ENCODE measurements at regions of chr6 and their contacts with region 1.

Region 1: DNA sequence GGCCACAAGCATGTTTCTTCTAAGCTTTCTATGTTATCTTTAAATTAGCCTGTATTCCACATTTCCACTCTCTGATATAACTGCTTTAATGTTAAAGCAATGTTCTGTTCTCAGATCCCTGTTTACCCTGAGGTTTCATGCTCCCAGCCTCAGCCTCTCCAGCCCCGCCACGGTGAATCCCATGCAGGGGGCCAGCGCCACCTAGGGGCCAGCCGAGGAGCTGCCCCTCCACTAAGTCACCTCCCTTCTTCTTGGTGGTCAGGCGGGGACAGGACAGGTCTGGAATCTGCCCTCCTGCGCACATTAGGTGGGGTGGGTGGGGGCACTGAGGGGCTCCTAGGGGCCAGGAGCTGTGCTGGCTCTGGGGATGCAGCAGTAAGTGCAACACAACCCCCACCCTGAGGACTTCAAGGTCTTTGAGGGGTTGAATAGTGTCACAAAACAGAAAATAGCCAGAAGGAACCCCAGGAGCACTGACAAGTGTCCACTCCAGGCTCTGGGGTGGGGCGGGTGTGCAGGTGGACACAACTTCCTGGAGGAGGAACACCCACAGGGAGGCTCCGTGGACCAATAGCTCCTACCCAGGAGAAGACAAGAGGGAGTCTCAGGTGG is 61.6 kb downstream of the RAB44 start:
- DNase-seq: peak; percentile 45
- H3K4me3 ChIP-seq: no peak overlapping the region
- H3K27ac ChIP-seq: no peak overlapping the region
- H3K27me3 ChIP-seq: peaks cover 4% of the 10 kb centered on the region
- CTCF ChIP-seq: peak; percentile 99

Region 2: DNA sequence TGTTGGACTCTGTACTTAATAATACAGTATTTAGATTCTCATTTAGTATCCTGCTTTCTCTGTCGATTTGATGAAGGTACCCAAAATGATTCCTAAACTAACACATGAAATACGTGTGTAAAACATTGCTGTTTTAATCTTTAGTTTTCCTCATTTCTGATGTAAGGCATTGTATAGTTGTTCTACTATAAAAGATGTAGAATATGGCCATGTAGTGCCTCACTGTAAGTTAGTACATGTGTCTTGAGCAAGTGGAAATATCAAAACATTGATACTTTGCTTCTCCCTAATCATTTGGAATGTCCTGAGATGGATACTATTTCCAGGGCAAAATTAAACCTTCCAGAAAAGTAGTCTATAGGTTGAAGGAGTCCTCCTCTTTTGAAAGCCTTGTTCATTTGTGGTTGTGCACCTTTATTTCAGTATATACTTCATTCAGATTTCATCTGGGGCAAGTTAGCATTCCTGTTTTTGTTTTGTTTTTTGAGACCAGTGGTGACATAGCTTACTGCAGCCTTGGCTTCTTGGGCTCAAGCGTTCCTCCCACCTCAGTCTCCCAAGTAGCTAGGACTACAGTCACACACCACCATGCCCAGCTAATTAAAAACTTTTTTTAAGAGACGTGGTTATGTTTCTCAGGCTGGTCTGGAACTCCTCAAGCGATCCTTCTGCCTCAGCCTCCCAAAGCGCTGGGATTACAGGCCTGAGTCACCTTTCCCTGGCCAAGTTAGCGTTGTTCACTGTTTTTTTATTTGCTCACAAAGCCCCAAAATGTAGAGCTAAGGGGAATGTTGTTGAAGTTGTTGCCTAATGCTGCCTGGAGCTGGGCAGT is 153.5 kb before region 1 on chr6:
- CTCF ChIA-PET with region 1: interaction called, 15 read pairs
- POLR2A ChIA-PET with region 1: no interaction called
- DNase-seq: no peak
- H3K4me3 ChIP-seq: no peak overlapping the region
- H3K27ac ChIP-seq: no peak overlapping the region
- H3K27me3 ChIP-seq: no peaks in the 10 kb centered on the region
- CTCF ChIP-seq: 0 out of 2 replicates have a peak, but pooled peaks have one; percentile 15

Region 3: GRCh38 chr6:36623547-36624459 is 135.5 kb before region 1 on chr6:
- CTCF ChIA-PET with region 1: interaction called, 38 read pairs
- POLR2A ChIA-PET with region 1: no interaction called
- DNase-seq: peak; percentile 56
- H3K4me3 ChIP-seq: no peak overlapping the region
- H3K27ac ChIP-seq: no peak overlapping the region
- H3K27me3 ChIP-seq: no peaks in the 10 kb centered on the region
- CTCF ChIP-seq: peak; percentile 90

Region 4: DNA sequence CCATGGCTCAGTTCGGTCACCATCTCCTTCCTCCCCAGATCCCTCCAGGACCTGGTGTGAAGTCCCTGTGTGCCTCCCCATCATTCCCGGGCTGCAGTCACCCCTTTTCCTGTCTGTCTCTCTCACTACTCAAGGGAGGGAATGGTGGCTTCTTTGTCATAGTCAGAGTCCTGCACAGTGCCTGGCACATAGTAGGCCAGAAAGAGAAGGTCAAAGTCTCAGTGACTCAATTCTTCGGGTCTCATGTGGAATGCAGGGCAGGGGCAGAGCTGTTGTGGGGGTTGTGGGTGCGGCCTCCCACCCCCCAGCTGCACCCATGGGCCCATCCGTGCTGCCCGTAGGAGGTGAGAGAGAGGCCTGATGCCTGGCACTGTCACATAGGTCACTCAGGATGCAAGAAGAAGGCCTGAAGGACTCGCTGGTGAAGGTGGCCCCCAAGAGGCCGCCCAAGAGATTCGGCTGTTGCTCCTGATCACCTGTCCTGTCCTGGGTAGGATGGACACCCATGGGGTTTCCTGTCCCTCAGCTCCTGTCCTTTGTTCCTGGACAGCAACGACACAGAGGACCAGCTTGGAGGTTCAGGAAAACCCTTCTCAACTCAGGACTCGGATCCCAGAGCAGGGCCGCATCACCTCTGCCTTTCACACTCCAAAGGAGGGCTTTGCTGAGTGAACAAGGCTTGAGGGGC is 27.5 kb before region 1 on chr6:
- CTCF ChIA-PET with region 1: interaction called, 11 read pairs
- POLR2A ChIA-PET with region 1: interaction called, 3 read pairs
- DNase-seq: no peak
- H3K4me3 ChIP-seq: no peak overlapping the region
- H3K27ac ChIP-seq: no peak overlapping the region
- H3K27me3 ChIP-seq: no peaks in the 10 kb centered on the region
- CTCF ChIP-seq: no peak

Region 5: DNA sequence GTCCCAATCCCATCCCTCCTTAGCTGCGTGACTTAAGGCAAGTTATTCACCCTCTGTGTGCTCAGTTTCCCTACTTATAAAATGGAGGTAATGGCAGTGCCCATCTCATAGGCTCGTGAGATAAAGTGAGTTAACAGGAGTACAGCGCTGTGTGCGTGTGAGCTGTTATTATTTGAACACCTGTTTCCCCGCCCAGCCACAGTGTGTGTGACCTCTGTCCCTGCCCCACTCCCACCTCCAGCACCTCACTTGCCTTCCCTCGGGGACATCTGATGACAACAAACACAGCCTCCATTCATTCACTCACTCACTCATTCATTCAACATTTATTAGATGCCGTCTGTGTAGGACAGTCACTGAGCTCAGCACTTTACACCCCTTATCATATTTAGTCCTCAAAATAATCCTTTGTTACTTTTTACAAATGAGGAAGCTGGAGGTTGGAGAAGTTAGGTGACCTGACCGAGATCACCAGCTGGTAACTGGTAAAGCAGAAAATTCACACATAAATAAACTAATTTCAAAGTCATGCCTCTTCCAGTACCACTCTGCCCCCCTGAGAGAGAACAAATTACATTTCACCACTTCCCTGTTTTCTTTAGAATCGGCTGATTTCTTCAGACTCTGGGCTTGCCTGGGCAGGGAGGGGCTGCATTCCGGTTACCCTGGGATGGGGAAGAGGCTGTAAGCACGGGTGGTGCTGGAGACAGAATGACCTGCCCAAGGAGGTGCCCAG is 21.4 kb after region 1 on chr6:
- CTCF ChIA-PET with region 1: interaction called, 11 read pairs
- POLR2A ChIA-PET with region 1: no interaction called
- DNase-seq: no peak
- H3K4me3 ChIP-seq: no peak overlapping the region
- H3K27ac ChIP-seq: no peak overlapping the region
- H3K27me3 ChIP-seq: peaks cover 45% of the 10 kb centered on the region
- CTCF ChIP-seq: no peak

Region 6: DNA sequence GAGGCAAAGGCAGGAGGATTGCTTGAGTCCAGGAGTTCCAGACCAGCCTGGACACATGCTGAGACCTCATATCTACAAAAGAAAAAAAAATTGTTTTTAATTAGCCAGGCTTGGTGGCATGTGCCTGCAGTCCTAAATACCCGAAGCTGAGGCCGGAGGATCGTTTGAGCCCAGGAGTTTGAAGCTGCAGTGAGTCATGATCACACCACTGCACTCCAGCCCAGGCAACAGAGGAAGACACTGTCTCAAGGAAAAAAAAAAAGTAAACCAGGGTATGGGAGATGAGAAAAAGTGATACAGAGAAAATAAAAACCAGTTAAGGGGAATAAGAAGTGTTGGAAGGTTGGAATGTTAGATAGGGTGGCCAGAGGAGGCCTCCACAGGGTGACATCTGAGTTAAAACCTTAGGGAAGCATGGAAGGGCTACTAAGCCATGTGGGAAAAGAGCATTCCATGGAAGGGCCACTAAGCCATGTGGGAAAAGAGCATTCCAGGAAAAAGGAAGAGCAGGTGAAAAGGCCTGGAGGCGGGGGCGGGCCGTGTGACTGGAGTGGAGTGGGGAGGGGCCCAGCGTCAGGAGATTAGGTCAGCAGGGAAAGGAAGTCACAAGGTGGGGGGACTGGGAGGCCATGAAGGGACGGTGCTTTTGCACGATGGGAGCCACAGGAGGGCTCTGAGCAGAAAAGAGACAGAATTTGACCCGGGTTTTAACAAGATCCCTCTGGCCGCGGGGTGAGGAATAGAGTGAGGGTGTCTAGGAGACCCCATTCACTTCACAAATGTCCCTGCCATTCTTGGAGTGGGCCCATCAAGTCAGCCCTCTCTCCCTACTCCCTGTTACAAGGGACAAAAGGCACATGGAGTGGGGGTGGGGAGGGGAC is 61.7 kb after region 1 on chr6:
- CTCF ChIA-PET with region 1: no interaction called
- POLR2A ChIA-PET with region 1: no interaction called
- DNase-seq: peak; percentile 21
- H3K4me3 ChIP-seq: no peak overlapping the region
- H3K27ac ChIP-seq: peak overlapping the region; percentile 40
- H3K27me3 ChIP-seq: peaks cover 5% of the 10 kb centered on the region
- CTCF ChIP-seq: no peak

Measured in AG04450 (cell line).